ENCODE measurements at regions of chr3 and their contacts with region 1.

Region 1: GRCh38 chr3:46378426-46378942 is 7.7 kb downstream of the CCR5 start:
- DNase-seq: peak; percentile 42
- ATAC-seq: peak; percentile 40
- H3K4me3 Mint-ChIP-seq: no peak overlapping the region
- H3K27ac Mint-ChIP-seq: no peak overlapping the region
- H3K4me1 Mint-ChIP-seq: peaks cover 43% of the 10 kb centered on the region
- H3K27me3 Mint-ChIP-seq: no peaks in the 10 kb centered on the region
- CTCF ChIP-seq: no peak

Region 2: GRCh38 chr3:46406788-46407611 is 28.5 kb after region 1 on chr3 and contains the starts of genes CCR5AS and CCRL2:
- CTCF ChIA-PET with region 1: interaction called, 4 read pairs
- POLR2A ChIA-PET with region 1: no interaction called
- intact Hi-C with region 1: loop called (anchors 2 kb)
- DNase-seq: peak; percentile 22
- ATAC-seq: peak; percentile 83
- H3K4me3 Mint-ChIP-seq: peak within 1 kb of the TSS; percentile 85
- H3K27ac Mint-ChIP-seq: peak within 1 kb of the TSS; percentile 81
- H3K4me1 Mint-ChIP-seq: peaks cover 31% of the 10 kb centered on the region
- H3K27me3 Mint-ChIP-seq: no peaks in the 10 kb centered on the region
- CTCF ChIP-seq: no peak
- total RNA-seq, gene CCRL2: 1.9 TPM in 2 replicates

Region 3: GRCh38 chr3:46442576-46443562 is 64.4 kb after region 1 on chr3:
- CTCF ChIA-PET with region 1: interaction called, 5 read pairs
- POLR2A ChIA-PET with region 1: no interaction called
- intact Hi-C with region 1: loop called (anchors 5 kb)
- DNase-seq: no peak
- ATAC-seq: no peak
- H3K4me3 Mint-ChIP-seq: no peak overlapping the region
- H3K27ac Mint-ChIP-seq: no peak overlapping the region
- H3K4me1 Mint-ChIP-seq: peaks cover 39% of the 10 kb centered on the region
- H3K27me3 Mint-ChIP-seq: no peaks in the 10 kb centered on the region
- CTCF ChIP-seq: no peak

Region 4: GRCh38 chr3:46558184-46559043 is 179.9 kb after region 1 on chr3:
- CTCF ChIA-PET with region 1: no interaction called
- POLR2A ChIA-PET with region 1: no interaction called
- intact Hi-C with region 1: loop called (anchors 5 kb)
- DNase-seq: peak; percentile 50
- ATAC-seq: peak; percentile 98
- H3K4me3 Mint-ChIP-seq: peak overlapping the region; percentile 61
- H3K27ac Mint-ChIP-seq: no peak overlapping the region
- H3K4me1 Mint-ChIP-seq: peaks cover 20% of the 10 kb centered on the region
- H3K27me3 Mint-ChIP-seq: peaks cover 1% of the 10 kb centered on the region
- CTCF ChIP-seq: no peak